ENCODE measurements at regions of chr5 and their contacts with region 1.

Region 1: DNA sequence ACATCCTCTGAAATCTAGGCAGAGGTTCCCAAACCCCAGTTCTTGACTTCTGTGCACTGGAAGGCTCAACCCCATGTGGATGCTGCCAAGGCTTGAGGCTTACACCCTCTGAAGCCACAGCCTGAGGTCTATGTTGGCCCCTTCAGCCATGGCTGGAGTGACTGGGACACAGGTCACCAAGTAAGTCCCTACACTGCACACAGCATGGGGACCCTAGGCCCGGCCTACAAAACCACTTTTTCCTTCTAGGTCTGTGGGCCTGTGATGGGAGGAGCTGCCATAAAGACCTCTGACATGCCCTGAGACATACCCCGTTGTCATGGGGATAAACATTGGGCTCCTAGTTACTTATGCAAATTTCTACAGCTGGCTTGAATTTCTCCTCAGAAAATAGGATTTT is 418.8 kb upstream of the CCNH start:
- DNase-seq: no peak
- H3K4me3 ChIP-seq: no peak overlapping the region
- H3K27ac ChIP-seq: no peak overlapping the region
- H3K4me1 ChIP-seq: no peaks in the 10 kb centered on the region
- H3K27me3 ChIP-seq: no peaks in the 10 kb centered on the region
- CTCF ChIP-seq: no peak
- EP300 ChIP-seq: no peak
- POLR2A ChIP-seq: no peak

Region 2: DNA sequence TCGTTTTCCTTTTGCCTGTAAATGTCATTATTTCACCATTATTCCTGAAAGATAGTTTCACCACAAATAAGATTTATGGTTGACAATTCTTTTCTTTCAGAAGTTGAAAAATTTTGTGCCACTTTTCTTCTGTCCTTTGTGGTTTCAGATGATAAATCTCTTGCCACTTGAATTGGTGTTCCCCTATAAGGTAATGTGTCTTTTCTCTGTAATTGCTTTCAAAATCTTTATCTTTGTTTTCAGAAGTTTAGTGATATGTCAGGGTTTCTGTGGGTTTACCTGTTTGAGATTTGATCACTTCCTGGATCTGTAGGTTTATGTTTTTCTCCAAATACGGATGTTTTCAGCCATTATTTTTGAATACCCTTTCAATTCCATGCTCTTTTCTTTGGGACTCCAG is 549.2 kb before region 1 on chr5:
- intact Hi-C with region 1: no loop called
- DNase-seq: no peak
- H3K4me3 ChIP-seq: no peak overlapping the region
- H3K27ac ChIP-seq: no peak overlapping the region
- H3K4me1 ChIP-seq: no peaks in the 10 kb centered on the region
- H3K27me3 ChIP-seq: no peaks in the 10 kb centered on the region
- CTCF ChIP-seq: no peak
- EP300 ChIP-seq: no peak
- POLR2A ChIP-seq: no peak

Region 3: GRCh38 chr5:87853541-87853940 is 22.0 kb after region 1 on chr5:
- intact Hi-C with region 1: loop called in 1 of 4 experiments (anchors 2 kb)
- DNase-seq: no peak
- H3K4me3 ChIP-seq: no peak overlapping the region
- H3K27ac ChIP-seq: no peak overlapping the region
- H3K4me1 ChIP-seq: no peaks in the 10 kb centered on the region
- H3K27me3 ChIP-seq: no peaks in the 10 kb centered on the region
- CTCF ChIP-seq: no peak
- EP300 ChIP-seq: no peak
- POLR2A ChIP-seq: no peak